ENCODE measurements at regions of chr2 and their contacts with region 1.

Region 1: DNA sequence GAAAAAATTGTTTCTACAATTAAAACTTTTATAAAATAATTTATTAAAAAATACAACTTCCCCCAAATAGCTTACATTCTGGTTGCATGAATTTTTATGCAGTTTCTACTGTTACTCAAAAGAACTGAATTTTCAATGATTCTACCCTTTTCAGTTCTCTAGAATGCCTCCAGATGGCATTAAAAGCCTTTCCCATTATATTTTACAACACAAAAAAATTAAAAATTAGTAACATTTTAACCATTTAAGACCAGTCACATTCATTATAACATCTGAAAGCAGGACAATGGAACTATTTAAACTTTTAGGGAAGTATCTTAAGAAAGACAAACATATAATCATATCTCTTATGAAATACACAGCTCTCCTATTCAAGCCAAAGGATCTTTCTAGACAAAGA is 236.0 kb upstream of the REV1 start:
- DNase-seq: no peak
- ATAC-seq: no peak
- H3K4me3 ChIP-seq: no peak overlapping the region
- H3K27ac ChIP-seq: no peak overlapping the region
- H3K4me1 ChIP-seq: peaks cover 3 to 37% (median 28%) of the 10 kb centered on the region in 12 donors
- H3K27me3 ChIP-seq: no peaks in the 10 kb centered on the region
- CTCF ChIP-seq: peak in 9 of 12 donors; percentile 20 to 58 (median 38)
- POLR2A ChIP-seq: no peak

Region 2: DNA sequence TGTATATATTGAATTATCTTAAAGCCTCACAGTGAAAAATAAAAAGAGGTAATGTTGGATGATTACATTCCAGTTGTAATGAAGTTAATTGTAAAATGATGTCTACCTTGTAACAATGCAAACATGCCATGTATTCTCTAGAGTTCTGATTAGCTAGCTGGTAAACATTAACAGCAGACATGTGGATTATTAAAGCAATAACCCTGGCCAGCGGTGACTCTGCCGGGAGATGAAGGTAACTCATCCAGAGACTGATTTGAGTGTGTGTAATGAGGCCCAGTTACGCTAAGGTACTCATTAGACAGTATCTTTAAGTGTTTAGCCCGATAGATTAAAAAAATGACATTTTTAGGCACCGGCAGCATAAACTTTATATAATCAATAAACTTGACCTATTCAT is 156.4 kb before region 1 on chr2:
- intact Hi-C with region 1: loop called in 3 of 10 experiments (anchors 10 kb)
- DNase-seq: no peak
- ATAC-seq: no peak
- H3K4me3 ChIP-seq: no peak overlapping the region
- H3K27ac ChIP-seq: no peak overlapping the region
- H3K4me1 ChIP-seq: peaks cover 0 to 14% (median 0%) of the 10 kb centered on the region in 12 donors
- H3K27me3 ChIP-seq: no peaks in the 10 kb centered on the region
- CTCF ChIP-seq: no peak
- POLR2A ChIP-seq: no peak

Region 3: DNA sequence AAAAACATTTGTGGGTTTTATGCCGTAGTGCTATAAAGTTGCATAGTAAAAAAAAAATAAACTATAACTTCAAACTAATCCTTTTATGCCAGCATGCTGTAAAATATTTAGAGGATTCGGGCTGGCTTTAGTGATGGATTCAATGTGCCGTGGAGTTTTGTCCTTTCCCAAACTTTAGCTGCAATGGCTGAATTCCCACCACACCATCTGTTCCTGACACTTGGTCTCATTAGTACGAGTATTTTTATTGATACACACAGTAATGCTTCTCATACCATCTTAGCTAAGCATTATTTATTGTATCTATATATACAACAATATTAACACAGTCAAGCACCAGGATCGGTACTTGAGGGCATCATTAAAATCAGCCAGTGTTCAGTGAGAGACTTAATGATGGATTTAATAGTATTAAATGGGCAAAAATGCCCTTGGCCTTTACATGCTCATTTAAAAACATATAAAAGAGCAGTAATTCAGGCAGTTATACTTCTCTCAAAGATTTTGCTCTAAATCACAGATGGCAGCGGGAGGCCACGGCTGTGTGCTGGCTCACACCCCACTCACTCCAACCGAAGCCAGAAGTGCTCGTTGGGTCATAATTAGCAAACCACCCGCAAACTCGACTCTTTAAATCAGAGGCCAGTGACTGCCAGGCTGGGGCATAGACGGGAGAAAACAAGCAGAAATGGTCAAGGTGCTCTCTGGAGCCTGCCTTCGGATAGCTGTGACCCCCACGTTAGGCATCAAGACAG is 61.0 kb after region 1 on chr2:
- intact Hi-C with region 1: no loop called
- DNase-seq: no peak
- ATAC-seq: no peak
- H3K4me3 ChIP-seq: no peak overlapping the region
- H3K27ac ChIP-seq: no peak overlapping the region
- H3K4me1 ChIP-seq: peaks cover 0 to 27% (median 8%) of the 10 kb centered on the region in 12 donors
- H3K27me3 ChIP-seq: no peaks in the 10 kb centered on the region
- CTCF ChIP-seq: no peak
- POLR2A ChIP-seq: no peak